Right ventricle myocardium inferior (tissue), 1 donor: ENCODE measurements at regions of chr16 and their contacts with region 1.

Region 1: GRCh38 chr16:4101421-4102219 is 14.6 kb downstream of the ADCY9 start:
- DNase-seq: no peak
- ATAC-seq: peak; percentile 91

Region 2: DNA sequence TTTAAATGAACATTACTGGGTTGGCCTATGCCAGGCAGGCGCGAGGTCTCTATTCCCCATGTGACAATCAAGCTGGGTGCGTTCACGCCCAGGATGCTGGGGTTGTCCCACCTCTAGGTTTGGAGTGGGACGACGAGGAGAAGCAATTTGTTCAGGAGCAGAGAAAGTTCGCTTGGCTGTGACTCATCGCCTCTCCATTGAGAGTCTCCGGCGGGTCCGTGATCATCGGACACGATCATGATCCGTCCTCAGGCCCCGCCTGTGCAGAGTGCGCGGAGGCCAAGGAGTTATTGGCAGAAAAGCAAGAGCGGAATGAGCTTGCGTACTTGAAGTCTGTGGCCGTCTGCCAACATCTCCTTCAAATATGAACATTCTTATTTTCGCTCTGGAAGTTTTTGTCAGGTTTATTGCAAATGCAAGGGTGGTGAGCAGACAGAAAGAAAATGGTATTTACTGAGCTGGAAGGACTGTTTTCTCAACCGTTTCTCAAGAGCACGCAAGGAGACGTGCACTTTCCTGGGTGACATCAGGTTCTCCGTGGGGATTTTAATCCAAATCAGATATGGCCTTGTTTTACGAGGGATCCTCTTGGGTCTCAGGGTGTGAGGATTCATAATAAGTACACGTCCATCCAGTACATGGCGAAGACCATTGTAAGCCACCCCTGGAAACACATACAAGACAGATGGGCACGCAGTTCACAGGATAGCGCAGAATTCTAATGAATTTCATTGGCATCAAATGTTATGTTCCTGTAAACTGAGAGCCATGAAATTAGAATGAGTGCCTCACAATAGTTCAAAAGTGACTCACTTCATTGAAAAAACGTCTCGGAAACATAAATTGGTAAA is 151.1 kb before region 1 on chr16:
- intact Hi-C with region 1: loop called (anchors 5 kb)
- DNase-seq: peak; percentile 92
- ATAC-seq: peak; percentile 75